Transverse colon (tissue), 4 donors: ENCODE measurements at regions of chr2 and their contacts with region 1.

Region 1: DNA sequence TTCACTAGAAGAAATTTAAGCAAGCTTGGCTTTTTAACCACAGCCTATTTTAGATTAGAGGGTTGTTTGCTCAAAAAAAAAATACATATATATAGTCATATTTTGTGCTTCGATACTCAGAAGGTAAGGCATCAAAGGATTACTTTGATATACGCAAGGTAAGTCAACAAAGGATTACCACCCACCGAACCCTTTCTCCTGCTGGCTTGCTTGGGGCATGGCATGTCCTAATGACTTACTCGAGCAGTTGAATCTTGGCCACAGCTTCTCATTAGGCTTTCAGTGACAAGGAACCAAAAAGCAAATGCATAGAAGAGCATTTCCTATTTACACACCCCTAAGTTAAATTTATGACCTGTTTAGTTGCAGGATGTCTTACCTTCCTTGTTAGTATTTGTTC is 295.7 kb downstream of the AGAP1 start:
- DNase-seq: no peak
- H3K4me3 ChIP-seq: no peak overlapping the region
- H3K27ac ChIP-seq: no peak overlapping the region
- H3K4me1 ChIP-seq: no peaks in the 10 kb centered on the region
- H3K27me3 ChIP-seq: no peaks in the 10 kb centered on the region
- CTCF ChIP-seq: no peak
- EP300 ChIP-seq: no peak
- POLR2A ChIP-seq: no peak

Region 2: GRCh38 chr2:236171680-236172254 is 382.2 kb after region 1 on chr2:
- in situ Hi-C with region 1: no loop called
- intact Hi-C with region 1: loop called (anchors 5 kb)
- DNase-seq: no peak
- H3K4me3 ChIP-seq: no peak overlapping the region
- H3K27ac ChIP-seq: no peak overlapping the region
- H3K4me1 ChIP-seq: peaks cover 0 to 59% (median 38%) of the 10 kb centered on the region in 4 donors
- H3K27me3 ChIP-seq: peaks cover 100% of the 10 kb centered on the region
- CTCF ChIP-seq: no peak
- EP300 ChIP-seq: no peak
- POLR2A ChIP-seq: no peak